Gastrocnemius medialis (tissue), 4 donors: ENCODE measurements at regions of chr17 and their contacts with region 1.

Region 1: GRCh38 chr17:69175812-69176795 is 34.4 kb upstream of the ABCA6 start:
- DNase-seq: no peak
- ATAC-seq: no peak
- H3K4me3 ChIP-seq: no peak overlapping the region
- H3K27ac ChIP-seq: peak overlapping the region in 1 of 4 donors; percentile 15
- H3K4me1 ChIP-seq: no peaks in the 10 kb centered on the region
- H3K27me3 ChIP-seq: no peaks in the 10 kb centered on the region
- CTCF ChIP-seq: no peak
- POLR2A ChIP-seq: no peak

Region 2: DNA sequence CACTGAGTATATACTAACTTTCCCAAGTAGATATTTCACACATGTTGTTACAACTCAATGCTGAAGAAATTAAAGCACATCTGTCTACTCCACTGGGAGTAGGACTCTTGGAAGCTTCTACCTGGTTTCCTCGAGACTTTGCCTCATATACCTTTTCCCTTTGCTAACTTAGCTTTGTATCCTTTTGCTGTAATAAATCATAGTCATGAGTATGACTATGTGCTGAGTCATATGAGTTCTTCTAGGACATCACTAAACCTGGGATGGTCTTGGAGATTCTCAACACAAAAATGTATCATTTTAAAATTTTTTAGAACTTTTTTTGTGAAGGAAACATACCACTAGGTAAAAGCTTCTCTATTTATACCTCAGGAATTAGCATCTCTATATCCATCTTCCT is 111.1 kb after region 1 on chr17:
- in situ Hi-C with region 1: loop called in 1 of 4 experiments (anchors 25 kb)
- intact Hi-C with region 1: no loop called
- DNase-seq: no peak
- ATAC-seq: peak in 1 of 2 donors; percentile 51
- H3K4me3 ChIP-seq: no peak overlapping the region
- H3K27ac ChIP-seq: peak overlapping the region; percentile 9 to 55 (median 40)
- H3K4me1 ChIP-seq: no peaks in the 10 kb centered on the region
- H3K27me3 ChIP-seq: no peaks in the 10 kb centered on the region
- CTCF ChIP-seq: no peak
- POLR2A ChIP-seq: no peak